GM12878 (cell line): ENCODE measurements at regions of chr3 and their contacts with region 1.

Region 1: DNA sequence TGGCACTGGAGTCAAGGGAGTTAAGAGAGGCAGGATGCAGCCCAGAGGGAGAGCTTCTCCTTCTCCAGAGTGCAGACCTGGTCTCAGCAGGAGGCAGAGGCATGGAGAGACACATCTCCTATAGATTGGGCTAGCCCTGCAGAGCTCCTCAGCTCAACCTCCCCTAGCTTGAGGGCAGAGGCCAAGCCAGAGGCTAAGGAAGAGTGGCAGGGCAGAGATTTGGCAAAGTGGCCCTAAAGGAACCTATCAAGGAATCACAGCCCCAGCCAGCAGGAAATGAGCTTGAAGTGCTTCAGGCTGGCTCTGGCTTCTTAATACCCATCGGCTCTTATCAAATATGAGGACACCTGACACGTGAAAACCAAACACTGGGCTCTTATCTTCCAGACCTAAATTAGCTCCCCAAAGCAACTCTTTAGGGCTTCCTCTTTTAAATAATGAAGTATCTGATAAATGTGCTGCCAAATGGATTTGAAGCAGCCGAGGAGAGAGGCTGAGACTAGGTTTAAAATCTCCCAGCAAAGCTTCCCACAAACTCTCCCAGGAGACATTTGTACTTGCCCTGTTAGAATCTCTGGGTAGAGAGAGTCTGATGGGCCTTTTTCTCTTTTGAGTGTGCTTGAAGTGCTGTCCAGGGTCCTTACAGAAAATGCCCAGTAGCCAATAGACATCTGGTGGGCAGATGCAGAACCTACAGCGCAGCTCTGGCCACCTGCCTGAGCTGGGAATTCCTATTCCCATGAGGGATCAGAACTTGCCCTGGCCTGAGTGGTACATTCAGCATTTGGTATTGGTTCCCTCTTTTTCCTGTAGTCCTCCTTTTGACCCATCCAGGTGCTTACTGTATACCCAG is 271.4 kb downstream of the CLSTN2 start:
- DNase-seq: no peak
- ATAC-seq: peak; percentile 65
- H3K4me3 ChIP-seq: no peak overlapping the region
- H3K27ac ChIP-seq: no peak overlapping the region
- H3K4me1 ChIP-seq: no peaks in the 10 kb centered on the region
- H3K27me3 ChIP-seq: no peaks in the 10 kb centered on the region; a peak in 2 of 4 replicates
- CTCF ChIP-seq: peak in 2 of 3 experiments; percentile 24 to 30; a peak in 2 of 6 replicates
- EP300 ChIP-seq: no peak
- POLR2A ChIP-seq: no peak
- RAD21 ChIP-seq: peak; percentile 35; the same call in 1 of the 2 replicates

Region 2: GRCh38 chr3:140134231-140134965 is 72.0 kb before region 1 on chr3:
- CTCF ChIA-PET with region 1: interaction called, 16 read pairs
- POLR2A ChIA-PET with region 1: no interaction called
- RAD21 ChIA-PET with region 1: interaction called, 6 read pairs
- SMC1A ChIA-PET with region 1: interaction called, 12 read pairs
- in situ Hi-C with region 1: loop called (anchors 5 kb)
- intact Hi-C with region 1: no loop called
- DNase-seq: no peak
- ATAC-seq: no peak
- H3K4me3 ChIP-seq: no peak overlapping the region
- H3K27ac ChIP-seq: no peak overlapping the region
- H3K4me1 ChIP-seq: no peaks in the 10 kb centered on the region
- H3K27me3 ChIP-seq: peaks cover 0 to 2% of the 10 kb centered on the region in 2 experiments; a peak in 2 of 4 replicates
- CTCF ChIP-seq: no peak
- EP300 ChIP-seq: no peak
- POLR2A ChIP-seq: no peak
- RAD21 ChIP-seq: no peak

Region 3: GRCh38 chr3:140176526-140176925 is 29.9 kb before region 1 on chr3:
- CTCF ChIA-PET with region 1: interaction called, 3 read pairs
- POLR2A ChIA-PET with region 1: no interaction called
- RAD21 ChIA-PET with region 1: interaction called, 4 read pairs
- SMC1A ChIA-PET with region 1: interaction called, 12 read pairs
- in situ Hi-C with region 1: no loop called
- intact Hi-C with region 1: no loop called
- DNase-seq: no peak
- ATAC-seq: no peak
- H3K4me3 ChIP-seq: no peak overlapping the region
- H3K27ac ChIP-seq: no peak overlapping the region
- H3K4me1 ChIP-seq: no peaks in the 10 kb centered on the region; the same call in 1 of the 2 replicates
- H3K27me3 ChIP-seq: no peaks in the 10 kb centered on the region
- CTCF ChIP-seq: no peak
- EP300 ChIP-seq: no peak
- POLR2A ChIP-seq: no peak
- RAD21 ChIP-seq: no peak